GM12878 (cell line): ENCODE measurements at regions of chr12 and their contacts with region 1.

Region 1: GRCh38 chr12:84016956-84017355 is 895.6 kb downstream of the SLC6A15 start:
- DNase-seq: no peak
- ATAC-seq: no peak
- H3K4me3 ChIP-seq: no peak overlapping the region
- H3K27ac ChIP-seq: no peak overlapping the region
- H3K4me1 ChIP-seq: no peaks in the 10 kb centered on the region
- H3K27me3 ChIP-seq: no peaks in the 10 kb centered on the region
- CTCF ChIP-seq: no peak
- EP300 ChIP-seq: no peak
- POLR2A ChIP-seq: no peak
- RAD21 ChIP-seq: no peak

Region 2: GRCh38 chr12:84077679-84078078 is 60.7 kb after region 1 on chr12:
- CTCF ChIA-PET with region 1: no interaction called
- POLR2A ChIA-PET with region 1: no interaction called
- RAD21 ChIA-PET with region 1: no interaction called
- SMC1A ChIA-PET with region 1: no interaction called
- in situ Hi-C with region 1: no loop called
- intact Hi-C with region 1: no loop called
- DNase-seq: no peak
- ATAC-seq: no peak
- H3K4me3 ChIP-seq: no peak overlapping the region
- H3K27ac ChIP-seq: no peak overlapping the region
- H3K4me1 ChIP-seq: no peaks in the 10 kb centered on the region
- H3K27me3 ChIP-seq: no peaks in the 10 kb centered on the region
- CTCF ChIP-seq: no peak
- EP300 ChIP-seq: no peak
- POLR2A ChIP-seq: no peak
- RAD21 ChIP-seq: no peak

Region 3: DNA sequence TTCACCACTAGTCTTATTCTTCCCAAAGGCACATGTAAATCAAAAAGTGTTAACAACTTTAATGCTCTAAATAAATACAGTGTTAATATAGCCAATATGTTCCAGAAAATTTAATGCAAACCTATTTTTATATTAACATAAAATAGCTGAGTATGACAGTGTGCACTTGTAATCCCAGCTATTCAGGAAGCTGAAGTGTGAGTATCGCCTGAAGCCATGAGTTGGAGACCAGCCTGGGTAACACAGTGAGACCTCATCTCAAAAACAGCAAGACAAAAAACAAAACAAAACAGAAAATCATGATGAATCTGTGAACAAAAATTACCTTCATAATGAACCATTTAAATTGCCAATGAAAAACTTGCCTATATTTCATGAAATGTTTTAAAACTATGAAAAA is 96.7 kb after region 1 on chr12:
- CTCF ChIA-PET with region 1: no interaction called
- POLR2A ChIA-PET with region 1: no interaction called
- RAD21 ChIA-PET with region 1: no interaction called
- SMC1A ChIA-PET with region 1: no interaction called
- in situ Hi-C with region 1: loop called (anchors 25 kb)
- intact Hi-C with region 1: no loop called
- DNase-seq: no peak
- ATAC-seq: no peak
- H3K4me3 ChIP-seq: no peak overlapping the region
- H3K27ac ChIP-seq: no peak overlapping the region
- H3K4me1 ChIP-seq: no peaks in the 10 kb centered on the region
- H3K27me3 ChIP-seq: no peaks in the 10 kb centered on the region
- CTCF ChIP-seq: no peak
- EP300 ChIP-seq: no peak
- POLR2A ChIP-seq: no peak
- RAD21 ChIP-seq: no peak